Activated CD4-positive, alpha-beta memory T cell treated with anti-CD3 and anti-CD28 coated beads, Interleukin-2, amount 10 ng/mL, durations not matched to agents 7 days and 5 days (primary cell): ENCODE measurements at regions of chr17 and their contacts with region 1.

Region 1: DNA sequence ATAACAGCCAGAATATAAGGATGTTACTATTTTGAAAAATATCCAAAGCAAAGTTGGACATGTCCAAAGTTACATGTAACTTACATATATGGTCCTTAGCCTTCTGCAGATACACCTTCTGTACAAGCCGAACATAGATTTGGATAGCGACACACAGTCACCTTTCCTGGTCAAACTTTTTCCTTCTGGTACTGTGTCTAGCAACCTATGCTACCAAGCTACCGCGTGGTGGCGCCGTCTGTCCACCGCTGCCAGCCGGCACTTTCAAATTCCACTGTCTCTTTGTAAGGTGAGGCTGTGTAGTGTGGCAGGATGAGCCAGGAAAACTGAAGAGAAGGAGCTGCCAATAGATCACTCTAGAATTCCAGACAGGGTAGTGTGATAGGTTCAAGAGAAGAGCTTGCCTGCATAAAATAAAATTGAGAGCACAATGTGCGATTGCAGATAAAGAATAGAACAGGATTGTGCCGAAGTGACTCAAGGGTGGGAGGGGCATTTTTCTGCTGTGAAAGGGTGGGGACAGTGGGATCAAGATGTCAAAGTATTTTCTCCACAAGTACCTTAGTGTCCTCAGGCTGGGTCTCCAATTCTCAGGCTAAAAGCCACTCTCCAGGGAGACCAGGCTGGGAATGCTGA is 366.9 kb downstream of the SLC39A11 start:
- DNase-seq: peak; percentile 64
- H3K4me3 Mint-ChIP-seq: no peak overlapping the region
- H3K27ac Mint-ChIP-seq: peak overlapping the region; percentile 96
- H3K4me1 Mint-ChIP-seq: peaks cover 65% of the 10 kb centered on the region
- H3K27me3 Mint-ChIP-seq: no peaks in the 10 kb centered on the region

Region 2: GRCh38 chr17:72618001-72618509 is 107.5 kb before region 1 on chr17:
- CTCF ChIA-PET with region 1: interaction called, 32 read pairs
- POLR2A ChIA-PET with region 1: interaction called, 14 read pairs
- DNase-seq: peak; percentile 72
- H3K4me3 Mint-ChIP-seq: peak overlapping the region; percentile 63
- H3K27ac Mint-ChIP-seq: peak overlapping the region; percentile 83
- H3K4me1 Mint-ChIP-seq: peaks cover 33% of the 10 kb centered on the region
- H3K27me3 Mint-ChIP-seq: peaks cover 30% of the 10 kb centered on the region

Region 3: DNA sequence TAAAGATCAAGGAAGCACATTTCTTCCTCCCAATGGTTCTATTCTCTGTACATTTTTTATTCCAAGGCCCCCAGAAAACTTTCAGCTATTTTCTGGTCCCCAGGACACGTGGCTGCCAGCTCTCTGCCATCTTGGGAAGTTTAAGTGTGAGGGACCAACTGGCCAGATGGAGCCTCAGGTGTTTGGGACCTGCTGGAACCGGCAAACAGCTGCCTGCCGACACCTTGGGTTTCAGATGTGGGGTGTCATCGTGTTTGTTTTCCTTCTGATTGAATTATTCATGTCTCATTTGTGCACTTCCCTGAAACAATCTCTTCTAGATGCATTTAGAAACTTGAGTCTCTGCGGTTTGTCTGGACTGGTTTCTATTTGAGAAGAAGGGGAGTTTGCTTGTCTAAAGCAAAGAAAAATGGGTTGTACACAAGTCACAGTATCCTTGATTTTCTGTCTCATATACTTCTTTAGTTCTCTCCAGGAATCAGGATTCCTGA is 19.6 kb before region 1 on chr17:
- CTCF ChIA-PET with region 1: interaction called, 60 read pairs
- POLR2A ChIA-PET with region 1: interaction called, 45 read pairs
- DNase-seq: no peak
- H3K4me3 Mint-ChIP-seq: no peak overlapping the region
- H3K27ac Mint-ChIP-seq: peak overlapping the region; percentile 85
- H3K4me1 Mint-ChIP-seq: peaks cover 63% of the 10 kb centered on the region
- H3K27me3 Mint-ChIP-seq: no peaks in the 10 kb centered on the region

Region 4: DNA sequence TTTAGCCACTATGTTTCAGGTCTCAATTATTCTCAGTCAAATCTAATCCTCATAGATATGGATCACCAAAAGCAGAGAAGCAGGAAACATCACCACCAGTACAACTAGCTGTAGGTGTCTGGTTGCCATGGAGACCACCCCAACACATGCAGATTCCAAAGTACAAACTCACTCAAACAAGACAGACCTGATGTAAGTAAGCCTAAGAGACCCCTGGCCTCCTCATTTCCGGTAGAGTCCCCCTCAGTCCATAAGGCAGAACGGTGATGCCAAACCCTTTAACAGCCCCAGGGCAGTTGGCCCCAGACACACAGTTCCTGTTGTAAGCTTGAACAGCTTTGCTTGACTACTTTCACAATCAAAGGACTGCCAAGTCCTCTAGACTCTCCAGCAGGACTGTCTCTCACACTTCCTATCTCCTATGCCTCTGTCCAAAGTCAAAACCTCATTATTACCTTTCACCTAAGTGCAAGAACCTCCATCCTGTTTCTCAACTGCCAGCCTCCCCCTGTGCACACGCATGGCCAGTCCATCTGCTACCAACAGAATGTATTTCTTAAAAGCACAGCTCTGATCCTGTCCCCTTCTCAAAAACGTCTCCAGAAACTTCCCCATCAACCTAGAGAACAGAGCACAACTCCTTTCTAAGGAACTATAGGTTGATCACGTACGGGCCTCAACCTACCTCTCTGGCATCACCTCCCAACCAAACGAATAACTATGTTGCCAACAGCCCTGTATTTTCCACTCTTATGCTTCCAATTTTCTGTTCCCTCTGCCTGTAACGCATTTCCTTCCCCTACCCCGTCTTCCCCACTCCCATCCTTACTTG is 343.0 kb after region 1 on chr17:
- CTCF ChIA-PET with region 1: no interaction called
- POLR2A ChIA-PET with region 1: no interaction called
- DNase-seq: no peak
- H3K4me3 Mint-ChIP-seq: no peak overlapping the region
- H3K27ac Mint-ChIP-seq: no peak overlapping the region
- H3K4me1 Mint-ChIP-seq: no peaks in the 10 kb centered on the region
- H3K27me3 Mint-ChIP-seq: no peaks in the 10 kb centered on the region

Region 5: DNA sequence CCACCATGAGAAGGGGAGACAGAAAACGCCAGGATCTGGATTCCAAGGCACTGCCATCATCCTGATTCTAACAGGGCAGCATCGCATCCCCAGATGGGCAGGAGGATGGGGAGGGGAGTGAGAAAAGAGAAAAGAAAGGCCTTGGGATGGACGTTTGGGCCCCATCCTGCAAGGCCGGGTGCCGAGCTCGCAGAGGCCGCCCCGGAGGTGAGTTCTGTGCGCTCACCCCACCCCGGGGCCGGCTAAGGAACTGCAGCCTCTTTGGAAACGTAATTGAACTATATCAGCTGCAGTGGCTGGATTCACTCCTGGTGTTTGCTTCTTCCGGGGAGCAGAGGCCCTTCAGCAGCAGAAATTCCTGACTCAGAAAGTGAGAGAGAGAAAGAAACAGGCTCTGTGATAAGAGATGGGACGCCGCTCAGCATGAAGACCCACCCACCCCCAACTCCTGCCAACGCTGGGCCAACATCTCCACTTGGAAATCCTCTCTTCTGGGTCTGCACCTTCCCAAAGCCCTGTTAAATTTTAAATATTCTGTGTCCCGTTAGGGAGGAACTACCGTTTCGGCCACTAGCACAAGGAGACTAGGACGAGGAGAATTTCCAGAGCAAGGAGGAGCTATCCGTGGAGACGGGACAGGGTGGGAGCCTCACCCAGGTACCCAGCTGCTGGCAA is 430.8 kb after region 1 on chr17:
- CTCF ChIA-PET with region 1: interaction called, 76 read pairs
- POLR2A ChIA-PET with region 1: no interaction called
- DNase-seq: peak; percentile 64
- H3K4me3 Mint-ChIP-seq: no peak overlapping the region
- H3K27ac Mint-ChIP-seq: no peak overlapping the region
- H3K4me1 Mint-ChIP-seq: peaks cover 11% of the 10 kb centered on the region
- H3K27me3 Mint-ChIP-seq: peaks cover 16% of the 10 kb centered on the region

Region 6: DNA sequence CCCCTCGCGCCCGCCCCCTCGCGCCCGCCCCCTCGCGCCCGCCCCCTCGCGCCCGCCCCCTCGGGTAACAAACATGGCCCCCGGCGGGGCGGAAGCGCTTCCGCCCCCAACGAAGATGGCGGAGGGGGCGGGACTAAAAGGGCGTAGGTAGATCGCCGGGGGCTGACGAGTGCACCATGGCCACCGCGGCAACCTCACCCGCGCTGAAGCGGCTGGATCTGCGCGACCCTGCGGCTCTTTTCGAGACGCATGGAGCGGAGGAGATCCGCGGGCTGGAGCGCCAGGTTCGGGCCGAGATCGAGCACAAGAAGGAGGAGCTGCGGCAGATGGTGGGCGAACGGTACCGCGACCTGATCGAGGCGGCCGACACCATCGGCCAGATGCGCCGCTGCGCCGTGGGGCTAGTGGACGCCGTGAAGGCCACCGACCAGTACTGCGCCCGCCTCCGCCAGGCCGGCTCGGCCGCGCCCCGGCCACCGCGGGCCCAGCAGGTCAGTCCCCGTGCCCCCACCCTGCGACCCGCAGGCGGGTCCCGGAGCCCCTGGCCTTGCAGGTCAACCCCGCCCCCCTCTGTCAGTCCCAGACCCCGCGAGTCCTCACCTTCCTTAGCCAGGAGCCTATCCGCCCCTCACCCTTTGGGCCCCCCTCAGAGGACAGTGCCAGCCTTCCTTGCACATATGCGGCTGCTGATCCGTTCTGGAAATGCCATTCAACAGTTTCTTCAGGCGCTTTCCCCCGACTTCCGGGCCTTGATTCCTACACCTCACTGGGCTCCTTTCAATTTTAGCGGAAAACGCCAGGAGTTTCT is 467.5 kb after region 1 on chr17 and contains the start of gene COG1:
- CTCF ChIA-PET with region 1: interaction called, 56 read pairs
- POLR2A ChIA-PET with region 1: interaction called, 21 read pairs
- DNase-seq: peak; percentile 92
- H3K4me3 Mint-ChIP-seq: peak within 1 kb of the TSS; percentile 95
- H3K27ac Mint-ChIP-seq: peak within 1 kb of the TSS; percentile 94
- H3K4me1 Mint-ChIP-seq: peaks cover 38% of the 10 kb centered on the region
- H3K27me3 Mint-ChIP-seq: no peaks in the 10 kb centered on the region
- total RNA-seq, gene COG1: 30.4 to 32.9 TPM

Region 7: DNA sequence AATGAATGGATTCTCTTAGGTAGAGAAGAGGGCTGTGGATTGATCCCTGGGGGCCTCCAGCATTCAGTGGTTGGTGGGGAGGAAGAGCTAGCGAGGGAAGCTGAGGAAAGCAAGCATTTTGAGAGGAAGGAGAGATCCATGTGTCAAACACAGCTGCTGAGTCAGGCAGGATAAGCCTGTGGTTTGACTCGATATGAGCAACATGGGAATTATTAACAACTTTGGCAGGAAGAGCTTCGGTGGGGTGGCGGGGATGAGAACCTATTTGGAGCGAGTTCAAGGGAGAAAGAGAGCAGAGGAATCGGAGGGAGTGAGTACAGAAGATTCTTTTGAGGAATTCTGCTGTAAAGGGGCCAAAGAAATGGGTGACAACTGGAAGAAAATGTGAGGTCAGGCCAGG is 645.7 kb after region 1 on chr17:
- CTCF ChIA-PET with region 1: interaction called, 73 read pairs
- POLR2A ChIA-PET with region 1: interaction called, 6 read pairs
- DNase-seq: no peak
- H3K4me3 Mint-ChIP-seq: no peak overlapping the region
- H3K27ac Mint-ChIP-seq: no peak overlapping the region
- H3K4me1 Mint-ChIP-seq: no peaks in the 10 kb centered on the region
- H3K27me3 Mint-ChIP-seq: peaks cover 8% of the 10 kb centered on the region